Caco-2 (cell line): ENCODE measurements at regions of chr20 and their contacts with region 1.

Region 1: GRCh38 chr20:49219089-49219923 is at the start of gene DDX27:
- DNase-seq: peak; percentile 100
- H3K4me3 ChIP-seq: peak within 1 kb of the TSS; percentile 54
- H3K4me3 Mint-ChIP-seq: peak within 1 kb of the TSS; percentile 89
- H3K27ac Mint-ChIP-seq: peak within 1 kb of the TSS; percentile 95
- H3K4me1 ChIP-seq: peaks cover 13% of the 10 kb centered on the region
- H3K4me1 Mint-ChIP-seq: peaks cover 16% of the 10 kb centered on the region
- H3K27me3 ChIP-seq: no peaks in the 10 kb centered on the region
- H3K27me3 Mint-ChIP-seq: no peaks in the 10 kb centered on the region
- CTCF ChIP-seq: no peak
- total RNA-seq, gene DDX27: 146 and 148 TPM in 2 replicates

Region 2: GRCh38 chr20:49046087-49046900 is 173.0 kb before region 1 on chr20 and contains the start of gene CSE1L:
- CTCF ChIA-PET with region 1: no interaction called
- POLR2A ChIA-PET with region 1: interaction called, 11 read pairs
- intact Hi-C with region 1: loop called (anchors 1 kb)
- DNase-seq: peak; percentile 99 to 100
- H3K4me3 ChIP-seq: peak within 1 kb of the TSS; percentile 83
- H3K4me3 Mint-ChIP-seq: peak within 1 kb of the TSS; percentile 97
- H3K27ac Mint-ChIP-seq: peak within 1 kb of the TSS; percentile 100
- H3K4me1 ChIP-seq: peaks cover 4% of the 10 kb centered on the region; the same call in 1 of the 2 replicates
- H3K4me1 Mint-ChIP-seq: peaks cover 28% of the 10 kb centered on the region
- H3K27me3 ChIP-seq: no peaks in the 10 kb centered on the region
- H3K27me3 Mint-ChIP-seq: no peaks in the 10 kb centered on the region
- CTCF ChIP-seq: peak in 1 of 2 experiments; percentile 45
- total RNA-seq, gene CSE1L: 316 and 324 TPM in 2 replicates

Region 3: GRCh38 chr20:49132995-49133478 is 86.3 kb before region 1 on chr20:
- CTCF ChIA-PET with region 1: interaction called, 85 read pairs
- POLR2A ChIA-PET with region 1: interaction called, 26 read pairs
- intact Hi-C with region 1: loop called (anchors 1 kb)
- DNase-seq: peak in 1 of 2 experiments; percentile 80
- H3K4me3 ChIP-seq: no peak overlapping the region
- H3K4me3 Mint-ChIP-seq: no peak overlapping the region
- H3K27ac Mint-ChIP-seq: no peak overlapping the region
- H3K4me1 ChIP-seq: 0 out of 2 replicates have a peak, but pooled peaks cover 5% of the 10 kb centered on the region
- H3K4me1 Mint-ChIP-seq: peaks cover 4% of the 10 kb centered on the region
- H3K27me3 ChIP-seq: no peaks in the 10 kb centered on the region
- H3K27me3 Mint-ChIP-seq: no peaks in the 10 kb centered on the region
- CTCF ChIP-seq: peak; percentile 73 to 77

Region 4: DNA sequence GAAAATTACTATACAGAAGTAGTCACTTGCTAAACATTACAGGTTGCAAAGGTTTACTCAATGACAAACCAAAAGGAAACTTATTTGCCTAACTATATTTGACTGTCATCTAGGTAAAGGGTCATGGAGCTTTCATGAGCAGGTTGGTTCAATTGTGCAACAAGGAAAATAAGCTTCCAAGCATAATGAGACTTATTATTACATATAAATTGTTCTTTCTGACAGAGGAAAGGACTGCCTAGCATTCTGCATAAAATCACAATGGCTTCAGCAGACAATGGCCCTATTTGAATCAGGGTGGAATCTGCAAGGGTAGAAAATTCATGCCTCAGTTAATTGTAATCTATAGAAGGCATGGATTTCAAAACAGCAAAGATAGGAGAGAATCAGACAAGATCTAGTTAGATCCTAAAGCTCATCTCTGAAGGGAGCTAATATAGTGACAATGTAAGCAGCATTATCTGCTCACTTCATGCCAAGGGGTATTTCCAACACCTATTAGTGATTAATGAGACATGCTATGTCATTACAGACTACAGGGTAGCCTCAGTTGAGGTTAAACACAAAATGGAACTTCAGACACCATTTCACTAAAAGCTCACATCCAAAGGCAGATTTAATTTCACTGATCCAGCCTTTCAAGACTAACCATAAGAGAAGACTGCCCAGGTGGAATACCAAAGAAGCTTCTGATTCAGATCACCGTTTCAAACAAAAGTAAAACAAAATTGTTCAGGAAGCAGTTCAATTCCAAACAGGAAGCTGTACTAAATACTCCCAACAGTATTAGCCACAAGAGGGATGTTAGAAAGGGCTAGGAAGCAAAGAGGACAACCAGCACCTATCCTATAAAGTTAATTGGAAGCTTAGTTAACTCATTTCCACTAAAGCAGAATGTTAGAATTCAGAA is 39.7 kb before region 1 on chr20:
- CTCF ChIA-PET with region 1: interaction called, 11 read pairs
- POLR2A ChIA-PET with region 1: interaction called, 6 read pairs
- intact Hi-C with region 1: no loop called
- DNase-seq: no peak
- H3K4me3 ChIP-seq: no peak overlapping the region
- H3K4me3 Mint-ChIP-seq: no peak overlapping the region
- H3K27ac Mint-ChIP-seq: no peak overlapping the region
- H3K4me1 ChIP-seq: peaks cover 13% of the 10 kb centered on the region
- H3K4me1 Mint-ChIP-seq: peaks cover 43% of the 10 kb centered on the region
- H3K27me3 ChIP-seq: no peaks in the 10 kb centered on the region
- H3K27me3 Mint-ChIP-seq: no peaks in the 10 kb centered on the region
- CTCF ChIP-seq: no peak

Region 5: DNA sequence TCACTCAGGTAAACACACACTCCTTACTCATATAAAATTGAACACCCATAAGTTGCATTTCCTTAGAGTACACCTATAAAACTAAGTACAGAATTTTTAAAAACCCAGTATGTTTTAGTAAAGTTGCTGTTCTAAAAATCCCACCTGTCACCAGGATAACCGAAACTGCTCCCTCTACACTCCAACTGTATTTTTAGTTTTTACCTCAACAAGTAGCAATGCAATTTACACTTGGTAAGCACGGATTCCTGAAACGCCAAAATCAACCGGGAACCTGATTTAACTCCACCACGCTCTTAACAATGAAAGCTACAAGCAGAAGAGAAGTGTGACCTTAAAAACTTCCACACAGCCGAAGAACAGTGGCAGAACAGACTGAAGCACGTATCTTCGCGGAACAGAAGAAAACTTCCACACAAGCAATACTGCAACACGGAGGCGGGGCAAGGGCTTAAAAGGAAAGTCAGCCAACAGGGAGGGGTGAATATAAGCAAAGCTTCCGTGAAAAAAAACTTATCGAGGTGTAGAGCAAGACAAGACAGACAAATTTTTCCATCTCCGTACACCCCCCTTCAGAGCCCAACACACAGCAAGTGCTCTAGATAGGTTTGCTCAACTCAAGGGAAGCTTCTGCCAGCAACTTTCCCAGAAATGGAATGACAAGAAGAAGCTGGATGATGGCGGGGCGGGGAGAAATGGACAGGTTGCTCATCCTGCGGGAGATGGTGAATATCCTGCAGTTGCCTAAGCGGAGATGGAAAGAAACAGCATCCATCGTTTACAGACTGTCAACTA is 32.6 kb before region 1 on chr20:
- CTCF ChIA-PET with region 1: interaction called, 12 read pairs
- POLR2A ChIA-PET with region 1: interaction called, 19 read pairs
- intact Hi-C with region 1: loop called (anchors 1 kb)
- DNase-seq: peak; percentile 64 to 71
- H3K4me3 ChIP-seq: peak overlapping the region; percentile 77
- H3K4me3 Mint-ChIP-seq: peak overlapping the region; percentile 81
- H3K27ac Mint-ChIP-seq: peak overlapping the region; percentile 65
- H3K4me1 ChIP-seq: peaks cover 27% of the 10 kb centered on the region
- H3K4me1 Mint-ChIP-seq: peaks cover 36% of the 10 kb centered on the region
- H3K27me3 ChIP-seq: no peaks in the 10 kb centered on the region
- H3K27me3 Mint-ChIP-seq: no peaks in the 10 kb centered on the region
- CTCF ChIP-seq: peak in 1 of 2 experiments; percentile 25

Region 6: DNA sequence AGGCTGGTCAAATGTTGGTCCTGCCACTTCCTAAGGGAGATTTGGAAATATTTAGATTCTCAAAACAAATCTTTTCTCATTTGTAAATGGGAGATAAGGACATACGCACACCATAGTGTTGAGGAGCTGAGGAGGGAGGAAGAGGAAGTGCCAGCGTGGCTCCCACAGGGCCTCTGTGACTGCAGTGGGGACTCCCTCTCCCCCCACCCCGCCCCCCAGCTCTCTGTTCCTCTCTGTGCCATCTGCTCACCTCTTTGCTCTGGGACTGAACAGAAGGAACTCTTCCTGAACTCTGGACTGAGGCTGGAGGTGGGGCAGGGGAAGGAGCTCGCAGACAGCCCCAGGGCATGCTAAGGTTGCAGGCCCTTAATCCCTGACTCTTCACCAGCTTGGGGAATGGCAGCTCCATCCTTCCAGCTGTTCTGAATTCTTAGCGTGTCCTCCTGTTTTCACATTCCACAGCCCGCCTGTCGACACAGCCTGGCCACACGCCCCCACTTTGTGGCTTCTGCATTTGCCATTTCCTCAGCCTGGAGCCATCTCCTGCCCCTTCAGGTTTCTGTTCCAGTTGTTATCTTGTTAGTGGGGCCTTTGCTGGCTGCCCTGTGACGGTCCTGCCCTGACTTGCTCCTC is 11.4 kb after region 1 on chr20:
- CTCF ChIA-PET with region 1: interaction called, 22 read pairs
- POLR2A ChIA-PET with region 1: interaction called, 10 read pairs
- intact Hi-C with region 1: no loop called
- DNase-seq: peak; percentile 85 to 92
- H3K4me3 ChIP-seq: no peak overlapping the region
- H3K4me3 Mint-ChIP-seq: no peak overlapping the region
- H3K27ac Mint-ChIP-seq: peak overlapping the region; percentile 22
- H3K4me1 ChIP-seq: peaks cover 22% of the 10 kb centered on the region
- H3K4me1 Mint-ChIP-seq: peaks cover 19% of the 10 kb centered on the region
- H3K27me3 ChIP-seq: no peaks in the 10 kb centered on the region
- H3K27me3 Mint-ChIP-seq: no peaks in the 10 kb centered on the region
- CTCF ChIP-seq: no peak

Region 7: DNA sequence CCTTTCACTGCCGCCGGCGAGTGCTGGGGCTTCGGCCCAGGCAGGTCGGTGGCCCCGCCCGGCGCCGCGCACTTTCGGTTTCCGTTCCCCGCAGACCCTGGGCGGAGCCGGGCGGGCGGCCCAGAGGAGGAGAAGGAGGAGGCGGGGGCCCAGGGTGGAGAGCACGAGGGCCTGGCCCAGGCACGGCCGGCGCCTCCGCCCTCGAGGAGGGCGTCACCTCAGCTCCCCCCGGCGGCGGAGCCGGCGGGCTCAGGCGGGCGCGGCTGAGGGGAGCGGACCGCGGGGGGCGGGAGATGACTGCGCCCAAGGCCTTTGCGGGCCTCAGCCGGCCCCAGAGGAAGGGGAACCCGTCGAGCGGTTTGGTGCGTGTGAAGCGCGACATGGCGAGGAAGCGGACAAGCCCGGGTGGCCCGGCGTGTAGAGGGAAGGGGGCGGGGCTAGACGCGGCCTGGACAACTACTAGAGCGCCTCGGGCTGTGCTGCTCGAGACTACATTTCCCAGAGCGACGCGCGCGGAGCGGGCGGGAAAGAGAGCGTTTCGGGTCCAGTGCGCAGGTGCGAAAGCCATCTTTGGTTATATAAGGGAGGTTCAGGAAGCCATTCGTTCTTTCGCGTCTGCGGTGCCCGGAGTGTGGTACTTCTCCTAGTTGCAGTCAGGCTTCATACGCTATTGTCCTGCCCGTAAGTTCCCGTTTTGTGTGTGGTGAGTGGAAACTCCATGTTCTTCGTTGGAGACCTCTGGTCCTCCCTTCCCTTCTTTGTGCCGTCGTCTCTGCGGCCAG is 58.9 kb after region 1 on chr20 and contains the start of gene ZNFX1:
- CTCF ChIA-PET with region 1: no interaction called
- POLR2A ChIA-PET with region 1: interaction called, 19 read pairs
- intact Hi-C with region 1: loop called (anchors 2 kb)
- DNase-seq: peak; percentile 100
- H3K4me3 ChIP-seq: peak within 1 kb of the TSS; percentile 76
- H3K4me3 Mint-ChIP-seq: peak within 1 kb of the TSS; percentile 81
- H3K27ac Mint-ChIP-seq: peak within 1 kb of the TSS; percentile 97
- H3K4me1 ChIP-seq: peaks cover 44% of the 10 kb centered on the region
- H3K4me1 Mint-ChIP-seq: peaks cover 56% of the 10 kb centered on the region
- H3K27me3 ChIP-seq: no peaks in the 10 kb centered on the region
- H3K27me3 Mint-ChIP-seq: peaks cover 9% of the 10 kb centered on the region
- CTCF ChIP-seq: no peak
- total RNA-seq, gene ZNFX1: 34.0 and 34.7 TPM in 2 replicates